Activated T-helper 1 cell treated with anti-CD3 and anti-CD28 coated beads, Interleukin-12 subunit alpha, Interleukin-12 subunit beta, Interleukin-2, Interleukin-4 antibody, amounts not matched to agents 30 ng/mL and 10 ng/mL and 1 ng/mL, durations not matched to agents 14 hours and 24 hours and 36 hours (primary cell): ENCODE measurements at regions of chr2 and their contacts with region 1.

Region 1: GRCh38 chr2:7773362-7774360 is 856.4 kb downstream of the RNF144A start:
- DNase-seq: peak; percentile 39
- H3K4me3 Mint-ChIP-seq: peak overlapping the region; percentile 28
- H3K27ac Mint-ChIP-seq: peak overlapping the region; percentile 91
- H3K4me1 Mint-ChIP-seq: peaks cover 41% of the 10 kb centered on the region
- H3K27me3 Mint-ChIP-seq: no peaks in the 10 kb centered on the region

Region 2: GRCh38 chr2:7437716-7438632 is 335.7 kb before region 1 on chr2:
- intact Hi-C with region 1: loop called (anchors 1 kb)
- DNase-seq: no peak
- H3K4me3 Mint-ChIP-seq: peak overlapping the region; percentile 54
- H3K27ac Mint-ChIP-seq: peak overlapping the region; percentile 88
- H3K4me1 Mint-ChIP-seq: peaks cover 86% of the 10 kb centered on the region
- H3K27me3 Mint-ChIP-seq: no peaks in the 10 kb centered on the region

Region 3: DNA sequence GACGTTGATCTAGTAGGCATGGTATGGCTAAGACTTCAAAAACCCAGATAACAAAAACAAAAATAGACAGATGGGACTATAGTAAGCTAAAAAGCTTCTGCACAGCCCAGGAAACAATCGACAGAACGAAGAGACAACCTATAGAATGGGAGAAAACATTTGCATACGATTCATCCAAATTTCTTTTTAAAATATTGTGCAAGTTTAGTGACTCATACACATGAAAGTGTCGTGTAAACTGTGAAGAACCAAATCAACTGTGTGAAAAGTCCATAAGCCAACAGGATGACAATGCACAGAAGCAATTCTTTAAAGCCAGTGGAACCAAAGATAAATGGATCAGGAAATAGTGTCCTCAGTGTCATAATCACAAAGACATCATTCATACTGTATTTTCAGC is 185.4 kb before region 1 on chr2:
- intact Hi-C with region 1: loop called (anchors 1 kb)
- DNase-seq: no peak
- H3K4me3 Mint-ChIP-seq: peak overlapping the region; percentile 28
- H3K27ac Mint-ChIP-seq: peak overlapping the region; percentile 61
- H3K4me1 Mint-ChIP-seq: peaks cover 37% of the 10 kb centered on the region
- H3K27me3 Mint-ChIP-seq: no peaks in the 10 kb centered on the region

Region 4: DNA sequence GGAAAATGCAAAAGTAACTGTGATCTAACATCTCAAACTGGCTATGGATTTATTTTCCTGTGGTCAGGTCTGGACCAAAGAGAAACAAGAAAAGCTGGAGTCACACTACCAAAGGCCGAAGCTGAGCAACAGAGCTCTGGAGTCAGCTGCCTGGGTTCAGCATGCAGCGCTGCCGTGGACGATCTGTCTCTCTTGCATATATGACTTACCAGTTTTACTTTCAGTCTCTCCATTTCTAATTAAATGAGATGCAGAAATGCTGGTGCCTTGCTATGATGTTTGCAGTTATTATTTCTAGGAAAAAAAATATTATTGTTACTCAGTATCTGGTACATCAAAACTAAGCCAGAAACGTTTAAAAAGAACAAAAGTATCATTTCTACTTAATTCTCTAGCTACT is 43.2 kb before region 1 on chr2:
- intact Hi-C with region 1: loop called (anchors 1 kb)
- DNase-seq: no peak
- H3K4me3 Mint-ChIP-seq: peak overlapping the region; percentile 87
- H3K27ac Mint-ChIP-seq: peak overlapping the region; percentile 80
- H3K4me1 Mint-ChIP-seq: peaks cover 66% of the 10 kb centered on the region
- H3K27me3 Mint-ChIP-seq: peaks cover 2% of the 10 kb centered on the region

Region 5: GRCh38 chr2:7825591-7826312 is 52.1 kb after region 1 on chr2:
- intact Hi-C with region 1: loop called (anchors 1 kb)
- DNase-seq: peak; percentile 55
- H3K4me3 Mint-ChIP-seq: peak overlapping the region; percentile 23
- H3K27ac Mint-ChIP-seq: peak overlapping the region; percentile 97
- H3K4me1 Mint-ChIP-seq: peaks cover 41% of the 10 kb centered on the region
- H3K27me3 Mint-ChIP-seq: peaks cover 4% of the 10 kb centered on the region

Region 6: DNA sequence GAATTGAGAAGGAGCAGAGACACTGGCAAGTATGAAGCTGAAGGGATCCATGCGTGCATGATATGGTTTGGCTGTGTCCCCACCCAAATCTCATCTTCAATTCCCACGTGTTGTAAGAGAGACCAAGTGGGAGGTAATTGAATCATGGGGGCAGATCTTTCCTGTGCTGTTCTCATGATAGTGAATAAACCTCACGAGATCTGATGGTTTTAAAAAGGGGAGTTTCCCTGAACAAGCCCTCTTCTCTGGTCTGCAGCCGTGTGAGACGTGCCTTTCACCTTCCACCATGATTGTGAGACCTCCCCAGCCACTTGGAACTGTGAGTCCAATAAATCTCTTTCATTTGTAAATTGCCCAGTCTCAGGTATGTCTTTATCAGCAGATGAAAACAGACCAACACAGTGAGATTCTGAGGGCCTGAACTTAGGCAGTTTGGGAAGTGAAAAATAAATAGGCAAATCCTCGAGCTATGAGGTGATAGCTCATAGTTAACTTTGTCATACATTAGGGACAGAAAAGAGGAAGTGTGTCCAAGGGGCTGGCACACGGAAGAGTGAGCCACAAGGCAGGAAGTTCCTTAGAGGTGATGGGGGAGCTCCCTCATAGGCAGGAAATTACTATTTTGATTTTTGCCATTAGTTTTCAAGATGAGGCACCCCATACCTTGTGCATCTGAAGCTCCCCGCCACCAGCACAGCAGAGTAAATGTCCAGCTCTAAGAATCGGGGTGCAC is 249.4 kb after region 1 on chr2:
- intact Hi-C with region 1: no loop called
- DNase-seq: no peak
- H3K4me3 Mint-ChIP-seq: no peak overlapping the region
- H3K27ac Mint-ChIP-seq: no peak overlapping the region
- H3K4me1 Mint-ChIP-seq: peaks cover 21% of the 10 kb centered on the region
- H3K27me3 Mint-ChIP-seq: peaks cover 2% of the 10 kb centered on the region

Region 7: DNA sequence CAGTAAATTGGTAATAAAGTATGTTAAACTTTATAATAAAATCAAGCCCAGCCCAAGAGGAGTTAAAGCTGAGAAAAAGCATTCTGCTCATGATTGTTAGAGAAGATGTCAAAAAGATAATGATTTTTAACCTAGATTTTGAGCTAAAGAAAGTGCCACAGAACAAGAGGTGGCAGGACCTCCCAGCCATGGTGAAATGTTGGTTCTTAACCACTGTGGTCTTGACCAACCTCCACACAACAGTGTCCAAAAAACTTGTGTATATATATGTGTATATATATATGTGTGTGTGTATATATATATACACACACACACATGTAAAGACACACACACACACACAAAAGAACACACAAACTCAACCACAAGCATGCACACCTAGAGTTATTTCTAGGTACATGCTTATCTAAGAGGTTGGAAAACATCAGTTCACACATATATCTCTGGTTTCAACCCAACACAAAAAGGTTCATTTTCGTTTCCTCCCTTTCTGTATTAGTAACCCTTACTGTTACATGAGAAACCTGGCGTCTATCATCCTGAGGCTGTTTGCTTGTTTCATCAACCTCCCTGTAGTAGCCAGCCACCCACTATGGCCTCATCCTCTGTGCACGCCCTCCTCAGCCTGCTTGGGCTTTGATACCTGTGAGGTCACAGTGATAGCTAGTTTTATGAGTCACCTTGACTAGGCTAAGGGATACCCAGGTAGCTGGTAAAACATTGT is 276.4 kb after region 1 on chr2:
- intact Hi-C with region 1: loop called (anchors 1 kb)
- DNase-seq: peak; percentile 52
- H3K4me3 Mint-ChIP-seq: peak overlapping the region; percentile 43
- H3K27ac Mint-ChIP-seq: peak overlapping the region; percentile 93
- H3K4me1 Mint-ChIP-seq: peaks cover 48% of the 10 kb centered on the region
- H3K27me3 Mint-ChIP-seq: no peaks in the 10 kb centered on the region

Region 8: GRCh38 chr2:8408560-8409460 is 635.1 kb after region 1 on chr2:
- intact Hi-C with region 1: loop called (anchors 1 kb)
- DNase-seq: peak; percentile 49
- H3K4me3 Mint-ChIP-seq: peak overlapping the region; percentile 1
- H3K27ac Mint-ChIP-seq: peak overlapping the region; percentile 80
- H3K4me1 Mint-ChIP-seq: peaks cover 19% of the 10 kb centered on the region
- H3K27me3 Mint-ChIP-seq: peaks cover 15% of the 10 kb centered on the region